ENCODE measurements at regions of chr1 and their contacts with region 1.

Region 1: GRCh38 chr1:3910857-3911845 is 11.1 kb upstream of the C1orf174 start:
- DNase-seq: peak; percentile 84
- H3K4me3 Mint-ChIP-seq: no peak overlapping the region
- H3K27ac Mint-ChIP-seq: no peak overlapping the region
- H3K4me1 Mint-ChIP-seq: peaks cover 4% of the 10 kb centered on the region
- H3K27me3 Mint-ChIP-seq: no peaks in the 10 kb centered on the region

Region 2: GRCh38 chr1:3954170-3955169 is 43.3 kb after region 1 on chr1:
- CTCF ChIA-PET with region 1: no interaction called
- intact Hi-C with region 1: no loop called
- DNase-seq: no peak
- H3K4me3 Mint-ChIP-seq: no peak overlapping the region
- H3K27ac Mint-ChIP-seq: no peak overlapping the region
- H3K4me1 Mint-ChIP-seq: no peaks in the 10 kb centered on the region
- H3K27me3 Mint-ChIP-seq: peaks cover 14% of the 10 kb centered on the region

Region 3: GRCh38 chr1:4118746-4119514 is 207.8 kb after region 1 on chr1:
- CTCF ChIA-PET with region 1: no interaction called
- intact Hi-C with region 1: no loop called
- DNase-seq: no peak
- H3K4me3 Mint-ChIP-seq: no peak overlapping the region
- H3K27ac Mint-ChIP-seq: no peak overlapping the region
- H3K4me1 Mint-ChIP-seq: no peaks in the 10 kb centered on the region
- H3K27me3 Mint-ChIP-seq: no peaks in the 10 kb centered on the region

Region 4: DNA sequence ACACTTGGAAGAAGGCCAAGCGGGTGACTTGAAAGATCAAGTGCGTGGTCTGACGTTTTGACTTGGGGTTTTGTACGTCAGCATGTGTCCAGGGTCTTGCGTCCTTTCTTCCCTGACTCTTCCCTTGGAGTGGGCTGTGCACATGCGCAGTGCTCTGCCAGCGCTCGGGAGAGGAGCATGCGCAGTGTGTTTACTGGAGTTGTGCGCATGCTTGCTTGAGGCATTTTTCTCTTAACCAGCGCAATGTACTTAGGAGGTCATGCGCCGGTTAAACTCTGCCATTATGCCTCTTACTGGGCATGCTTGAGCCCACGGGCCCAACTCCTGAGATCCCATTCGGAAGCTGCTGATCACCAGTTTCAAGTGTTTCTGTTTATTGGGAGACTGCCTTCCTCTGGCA is 500.7 kb after region 1 on chr1:
- CTCF ChIA-PET with region 1: no interaction called
- intact Hi-C with region 1: no loop called
- DNase-seq: no peak
- H3K4me3 Mint-ChIP-seq: no peak overlapping the region
- H3K27ac Mint-ChIP-seq: no peak overlapping the region
- H3K4me1 Mint-ChIP-seq: no peaks in the 10 kb centered on the region
- H3K27me3 Mint-ChIP-seq: peaks cover 4% of the 10 kb centered on the region

Region 5: GRCh38 chr1:4825800-4826450 is 914.8 kb after region 1 on chr1:
- CTCF ChIA-PET with region 1: no interaction called
- intact Hi-C with region 1: loop called (anchors 10 kb)
- DNase-seq: no peak
- H3K4me3 Mint-ChIP-seq: no peak overlapping the region
- H3K27ac Mint-ChIP-seq: no peak overlapping the region
- H3K4me1 Mint-ChIP-seq: no peaks in the 10 kb centered on the region
- H3K27me3 Mint-ChIP-seq: peaks cover 2% of the 10 kb centered on the region

Region 6: GRCh38 chr1:5745776-5746610 is 1834.8 kb after region 1 on chr1:
- CTCF ChIA-PET with region 1: no interaction called
- intact Hi-C with region 1: loop called (anchors 5 kb)
- DNase-seq: peak; percentile 67
- H3K4me3 Mint-ChIP-seq: no peak overlapping the region
- H3K27ac Mint-ChIP-seq: no peak overlapping the region
- H3K4me1 Mint-ChIP-seq: no peaks in the 10 kb centered on the region
- H3K27me3 Mint-ChIP-seq: peaks cover 18% of the 10 kb centered on the region

Measured in activated naive CD4-positive, alpha-beta T cell treated with anti-CD3 and anti-CD28 coated beads for 36 hours (primary cell).